ENCODE measurements at regions of chr5 and their contacts with region 1.

Region 1: DNA sequence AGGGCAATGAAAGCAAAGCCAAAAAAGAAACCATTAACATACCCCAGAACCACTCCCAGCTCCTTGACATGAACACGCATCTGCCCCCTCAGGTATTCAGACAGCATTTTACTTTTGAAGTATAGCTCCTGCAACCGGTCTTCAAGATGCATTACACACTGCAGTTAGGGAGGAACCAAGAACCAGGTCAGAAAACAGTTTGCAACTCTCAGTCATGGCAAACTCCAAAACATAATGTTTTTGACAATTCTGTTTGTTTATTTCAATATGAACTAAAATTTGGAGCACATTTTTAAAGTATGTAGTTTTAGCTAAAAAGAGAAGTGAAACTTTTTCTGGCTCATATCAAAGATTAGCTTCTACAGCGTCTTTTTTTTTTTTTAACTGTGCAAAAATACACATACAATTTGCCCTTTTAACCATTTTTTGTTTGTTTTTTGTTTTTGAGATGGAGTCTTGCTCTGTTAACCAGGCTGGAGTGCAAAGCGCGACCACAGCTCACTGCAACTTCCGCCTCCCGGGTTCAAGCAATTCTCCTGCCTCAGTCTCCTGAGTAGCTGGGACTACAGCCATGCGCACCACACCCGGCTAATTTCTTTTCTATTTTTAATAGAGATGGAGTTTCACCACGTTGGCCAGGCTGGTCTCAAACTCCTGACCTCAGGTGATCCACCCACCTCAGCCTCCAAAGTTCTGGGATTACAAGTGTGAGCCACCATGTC is 12.2 kb upstream of the RAPGEF6 start:
- DNase-seq: peak; percentile 36
- ATAC-seq: peak; percentile 94
- H3K4me3 ChIP-seq: peak overlapping the region; percentile 7; the same call in 1 of the 2 replicates
- H3K27ac ChIP-seq: peak overlapping the region; percentile 61
- H3K4me1 ChIP-seq: peaks cover 12% of the 10 kb centered on the region
- H3K27me3 ChIP-seq: no peaks in the 10 kb centered on the region
- CTCF ChIP-seq: peak; percentile 18 to 35 (median 30); a peak in 3 of 6 replicates
- EP300 ChIP-seq: peak in 1 of 2 experiments; percentile 24; a peak in 1 of 4 replicates
- POLR2A ChIP-seq: no peak
- RAD21 ChIP-seq: peak; percentile 43

Region 2: DNA sequence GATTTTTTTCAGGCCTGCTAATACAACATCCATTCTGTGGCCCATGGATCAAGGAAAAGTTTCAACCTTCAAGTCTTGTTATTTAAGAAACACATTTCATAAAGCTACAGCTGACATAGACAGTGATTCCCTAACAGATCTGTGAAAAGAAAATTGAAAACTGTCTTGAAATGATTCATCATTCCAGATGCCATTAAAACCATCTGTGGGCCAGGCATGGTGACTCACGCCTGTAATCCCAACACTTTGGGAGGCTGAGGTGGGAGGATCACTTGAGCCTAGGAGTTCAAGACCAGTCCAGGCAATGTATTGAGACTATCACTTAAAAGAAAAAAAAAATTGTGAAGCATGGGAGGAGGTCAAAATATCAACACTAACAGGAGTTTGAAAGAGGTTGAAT is 18.2 kb before region 1 on chr5:
- CTCF ChIA-PET with region 1: interaction called, 8 read pairs
- POLR2A ChIA-PET with region 1: interaction called, 13 read pairs
- RAD21 ChIA-PET with region 1: interaction called, 8 read pairs
- SMC1A ChIA-PET with region 1: interaction called, 22 read pairs
- in situ Hi-C with region 1: no loop called
- intact Hi-C with region 1: no loop called
- DNase-seq: no peak
- ATAC-seq: no peak
- H3K4me3 ChIP-seq: peak overlapping the region; percentile 37; the same call in 1 of the 2 replicates
- H3K27ac ChIP-seq: no peak overlapping the region; the same call in 1 of the 2 replicates
- H3K4me1 ChIP-seq: peaks cover 5% of the 10 kb centered on the region
- H3K27me3 ChIP-seq: no peaks in the 10 kb centered on the region
- CTCF ChIP-seq: no peak
- EP300 ChIP-seq: no peak
- POLR2A ChIP-seq: no peak
- RAD21 ChIP-seq: no peak

Region 3: GRCh38 chr5:131634996-131635754 is 12.0 kb before region 1 on chr5 and contains the start of gene RAPGEF6:
- CTCF ChIA-PET with region 1: interaction called, 8 read pairs
- POLR2A ChIA-PET with region 1: interaction called, 13 read pairs
- RAD21 ChIA-PET with region 1: interaction called, 22 read pairs
- SMC1A ChIA-PET with region 1: interaction called, 26 read pairs
- in situ Hi-C with region 1: no loop called
- intact Hi-C with region 1: no loop called
- DNase-seq: peak; percentile 100
- ATAC-seq: peak; percentile 90
- H3K4me3 ChIP-seq: peak within 1 kb of the TSS; percentile 93
- H3K27ac ChIP-seq: peak within 1 kb of the TSS; percentile 98
- H3K4me1 ChIP-seq: peaks cover 20% of the 10 kb centered on the region
- H3K27me3 ChIP-seq: no peaks in the 10 kb centered on the region
- CTCF ChIP-seq: peak in 1 of 3 experiments; percentile 17; a peak in 1 of 6 replicates
- EP300 ChIP-seq: peak; percentile 49 to 80; a peak in 2 of 4 replicates
- POLR2A ChIP-seq: peak; percentile 90
- RAD21 ChIP-seq: 0 out of 2 replicates have a peak, but pooled peaks have one; percentile 7
- polyA plus RNA-seq, gene RAPGEF6: 2.9 to 4.9 TPM

Region 4: GRCh38 chr5:131661931-131662330 is 14.7 kb after region 1 on chr5:
- CTCF ChIA-PET with region 1: interaction called, 7 read pairs
- POLR2A ChIA-PET with region 1: interaction called, 11 read pairs
- RAD21 ChIA-PET with region 1: interaction called, 5 read pairs
- SMC1A ChIA-PET with region 1: interaction called, 3 read pairs
- in situ Hi-C with region 1: no loop called
- intact Hi-C with region 1: no loop called
- DNase-seq: no peak
- ATAC-seq: no peak
- H3K4me3 ChIP-seq: no peak overlapping the region
- H3K27ac ChIP-seq: no peak overlapping the region
- H3K4me1 ChIP-seq: no peaks in the 10 kb centered on the region
- H3K27me3 ChIP-seq: no peaks in the 10 kb centered on the region
- CTCF ChIP-seq: no peak
- EP300 ChIP-seq: no peak
- POLR2A ChIP-seq: no peak
- RAD21 ChIP-seq: no peak

Region 5: DNA sequence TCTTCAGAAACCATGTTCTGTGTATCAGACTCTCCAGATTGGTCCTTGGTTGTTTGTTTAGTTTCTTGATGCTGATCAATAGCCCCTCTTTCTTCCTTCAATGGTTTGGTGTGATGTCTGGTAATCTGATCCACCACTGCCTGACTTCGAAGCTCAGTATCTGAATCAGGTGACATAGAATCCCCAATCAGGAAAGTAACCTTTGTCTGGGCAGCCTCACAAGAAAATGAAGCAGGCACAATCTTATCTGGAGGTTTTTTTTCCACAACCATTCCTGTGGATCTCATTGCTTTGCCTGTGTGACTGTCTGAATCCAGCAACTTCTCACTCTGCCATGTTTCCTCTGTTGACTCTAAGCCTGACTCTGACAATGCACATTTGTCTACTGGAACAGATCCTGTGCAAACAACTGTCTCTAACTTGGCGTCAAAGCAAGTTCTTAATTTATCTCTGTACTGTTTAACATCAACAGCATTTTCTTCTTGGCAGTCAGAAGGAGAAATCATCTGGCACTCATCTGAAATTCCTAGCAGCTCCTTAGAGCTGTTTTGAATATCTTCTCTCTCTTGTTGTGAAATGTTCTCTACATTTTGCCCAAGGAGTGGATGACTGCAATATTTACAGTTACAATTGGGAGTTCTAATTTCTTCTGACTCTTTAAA is 24.9 kb after region 1 on chr5:
- CTCF ChIA-PET with region 1: no interaction called
- POLR2A ChIA-PET with region 1: interaction called, 3 read pairs
- RAD21 ChIA-PET with region 1: interaction called, 6 read pairs
- SMC1A ChIA-PET with region 1: interaction called, 16 read pairs
- in situ Hi-C with region 1: no loop called
- intact Hi-C with region 1: no loop called
- DNase-seq: no peak
- ATAC-seq: no peak
- H3K4me3 ChIP-seq: no peak overlapping the region
- H3K27ac ChIP-seq: peak overlapping the region; percentile 63; the same call in 1 of the 2 replicates
- H3K4me1 ChIP-seq: peaks cover 38% of the 10 kb centered on the region
- H3K27me3 ChIP-seq: no peaks in the 10 kb centered on the region
- CTCF ChIP-seq: no peak
- EP300 ChIP-seq: no peak
- POLR2A ChIP-seq: no peak
- RAD21 ChIP-seq: no peak